ENCODE measurements at regions of chr10 and their contacts with region 1.

Region 1: DNA sequence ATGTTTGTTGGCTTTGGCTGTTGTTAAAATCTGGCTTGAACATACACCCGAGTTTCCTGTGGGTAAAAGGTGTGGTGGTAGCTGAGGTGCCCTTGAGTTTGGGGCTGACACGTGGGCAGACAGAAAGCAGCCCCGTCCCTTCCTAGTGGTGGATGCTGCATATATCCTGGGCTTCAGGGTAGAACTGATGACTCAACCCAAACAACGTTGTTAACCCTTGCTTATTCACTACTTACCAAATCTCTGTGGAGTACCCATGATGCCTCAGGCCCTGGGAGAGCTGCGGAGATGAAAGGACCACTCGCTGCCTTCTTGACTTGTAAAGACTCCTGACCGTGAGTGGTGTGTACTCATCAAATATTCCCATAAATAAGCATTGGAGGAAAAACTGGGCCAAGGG is 245.1 kb downstream of the RAB11FIP2 start:
- DNase-seq: no peak
- ATAC-seq: no peak

Region 2: GRCh38 chr10:117574498-117575146 is 227.1 kb before region 1 on chr10:
- intact Hi-C with region 1: no loop called
- DNase-seq: no peak
- ATAC-seq: no peak

Region 3: GRCh38 chr10:117594722-117595121 is 207.0 kb before region 1 on chr10:
- intact Hi-C with region 1: no loop called
- DNase-seq: no peak
- ATAC-seq: no peak

Region 4: DNA sequence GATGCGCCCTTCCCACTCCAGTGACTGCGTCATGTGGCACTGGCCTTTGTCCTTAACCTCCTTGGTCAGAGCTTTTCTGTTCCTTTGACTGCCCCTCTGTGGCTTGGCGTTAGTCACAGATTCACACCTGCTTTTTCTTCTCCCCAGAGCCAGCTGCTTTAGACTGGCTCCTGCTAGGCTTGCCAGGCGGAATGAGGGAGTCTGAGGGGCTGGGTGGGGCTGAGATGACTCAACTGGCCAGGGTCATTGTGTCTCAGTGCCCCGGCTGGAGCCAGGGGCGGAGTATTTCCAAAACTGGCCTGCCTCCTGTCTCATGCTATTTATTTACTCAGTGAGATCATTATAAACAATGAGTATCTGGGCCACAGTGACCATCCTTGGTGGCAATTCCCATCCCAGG is 65.0 kb before region 1 on chr10:
- intact Hi-C with region 1: loop called (anchors 2 kb)
- DNase-seq: no peak
- ATAC-seq: no peak

Measured in sciatic nerve (tissue), 2 donors.